Caco-2 (cell line): ENCODE measurements at regions of chr22 and their contacts with region 1.

Region 1: DNA sequence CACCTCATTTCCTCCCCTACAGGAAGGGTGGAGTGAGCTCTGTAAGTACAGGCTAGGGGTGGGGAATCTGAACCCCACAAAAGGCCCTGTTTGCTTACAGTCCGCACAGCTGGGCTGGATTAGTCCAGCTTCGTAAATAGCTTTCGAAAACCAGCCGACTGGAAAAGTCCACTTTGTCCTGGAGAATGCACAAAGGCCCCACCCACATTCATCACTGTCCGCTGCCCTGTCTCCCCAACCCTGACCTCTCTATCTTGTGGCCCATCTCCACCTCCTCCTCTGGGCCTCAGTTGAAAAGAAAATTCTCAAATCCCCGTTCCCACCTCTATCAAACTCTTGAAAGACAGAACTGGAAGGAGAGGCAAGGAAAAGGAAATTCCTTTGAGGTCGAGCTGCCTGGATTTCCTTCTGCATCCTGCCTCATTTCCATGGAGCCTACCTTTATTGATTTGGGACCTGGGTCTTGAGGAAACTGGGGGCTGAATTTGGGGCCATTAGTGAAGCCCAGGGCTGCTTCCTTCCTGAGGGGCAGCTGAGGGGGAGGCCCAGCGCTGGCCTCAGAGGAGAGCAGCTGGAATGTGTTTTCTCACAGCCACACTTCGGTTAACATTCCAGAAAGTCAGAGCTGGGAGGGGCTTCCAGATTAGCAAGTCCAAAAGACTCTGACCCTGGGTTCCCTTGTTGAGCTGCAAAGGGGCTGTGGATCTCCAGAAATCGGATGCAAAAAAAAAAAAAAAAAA is 147.6 kb downstream of the FBXO7 start:
- DNase-seq: peak; percentile 80 to 88
- H3K4me3 ChIP-seq: no peak overlapping the region
- H3K4me3 Mint-ChIP-seq: peak overlapping the region; percentile 70
- H3K27ac Mint-ChIP-seq: peak overlapping the region; percentile 95
- H3K4me1 ChIP-seq: peaks cover 42% of the 10 kb centered on the region
- H3K4me1 Mint-ChIP-seq: peaks cover 15% of the 10 kb centered on the region
- H3K27me3 ChIP-seq: no peaks in the 10 kb centered on the region
- H3K27me3 Mint-ChIP-seq: no peaks in the 10 kb centered on the region
- CTCF ChIP-seq: no peak

Region 2: GRCh38 chr22:32644252-32645100 is 22.3 kb after region 1 on chr22:
- CTCF ChIA-PET with region 1: no interaction called
- POLR2A ChIA-PET with region 1: no interaction called
- intact Hi-C with region 1: loop called (anchors 2 kb)
- DNase-seq: peak; percentile 65 to 81
- H3K4me3 ChIP-seq: no peak overlapping the region
- H3K4me3 Mint-ChIP-seq: no peak overlapping the region
- H3K27ac Mint-ChIP-seq: peak overlapping the region; percentile 92
- H3K4me1 ChIP-seq: peaks cover 11% of the 10 kb centered on the region
- H3K4me1 Mint-ChIP-seq: peaks cover 14% of the 10 kb centered on the region
- H3K27me3 ChIP-seq: no peaks in the 10 kb centered on the region
- H3K27me3 Mint-ChIP-seq: no peaks in the 10 kb centered on the region
- CTCF ChIP-seq: peak in 1 of 2 experiments; percentile 3

Region 3: DNA sequence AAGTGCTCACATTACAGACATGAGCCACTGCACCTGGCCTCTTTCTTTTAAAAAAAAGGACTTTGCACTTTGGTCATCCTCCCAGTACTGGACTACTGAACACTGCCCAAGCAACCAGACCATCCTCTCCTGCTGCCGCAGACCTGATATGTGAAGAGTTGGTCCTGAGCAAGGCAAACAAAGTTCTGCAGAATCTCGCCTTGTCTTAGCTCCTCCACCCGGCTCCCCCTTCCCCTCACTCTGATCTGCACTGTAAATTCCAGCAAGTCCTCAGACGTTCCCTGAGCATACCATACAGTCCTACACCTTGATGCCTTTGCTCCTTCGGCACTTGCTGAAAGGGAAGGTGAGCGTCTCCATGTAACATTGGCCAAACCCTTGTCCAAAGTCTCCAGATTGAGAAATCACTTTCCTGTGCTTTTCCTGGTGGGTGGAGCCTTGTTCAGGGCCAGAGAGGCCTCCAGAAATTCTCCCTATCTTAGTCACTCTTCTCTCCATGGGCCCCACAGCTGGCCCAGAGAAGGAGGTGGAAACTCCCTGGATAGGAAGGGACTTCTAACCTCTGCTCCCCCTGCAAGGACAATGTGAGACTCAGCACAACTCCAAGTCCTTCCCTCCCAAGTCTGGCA is 132.4 kb after region 1 on chr22:
- CTCF ChIA-PET with region 1: no interaction called
- POLR2A ChIA-PET with region 1: no interaction called
- intact Hi-C with region 1: no loop called
- DNase-seq: peak; percentile 64 to 77
- H3K4me3 ChIP-seq: no peak overlapping the region
- H3K4me3 Mint-ChIP-seq: peak overlapping the region; percentile 64
- H3K27ac Mint-ChIP-seq: peak overlapping the region; percentile 94
- H3K4me1 ChIP-seq: peaks cover 29% of the 10 kb centered on the region
- H3K4me1 Mint-ChIP-seq: peaks cover 17% of the 10 kb centered on the region
- H3K27me3 ChIP-seq: no peaks in the 10 kb centered on the region
- H3K27me3 Mint-ChIP-seq: no peaks in the 10 kb centered on the region
- CTCF ChIP-seq: no peak

Region 4: GRCh38 chr22:32788909-32789624 is 166.9 kb after region 1 on chr22:
- CTCF ChIA-PET with region 1: no interaction called
- POLR2A ChIA-PET with region 1: no interaction called
- intact Hi-C with region 1: loop called (anchors 10 kb)
- DNase-seq: peak; percentile 70 to 77
- H3K4me3 ChIP-seq: no peak overlapping the region
- H3K4me3 Mint-ChIP-seq: peak overlapping the region; percentile 27
- H3K27ac Mint-ChIP-seq: peak overlapping the region; percentile 98
- H3K4me1 ChIP-seq: peaks cover 22% of the 10 kb centered on the region
- H3K4me1 Mint-ChIP-seq: peaks cover 28% of the 10 kb centered on the region
- H3K27me3 ChIP-seq: no peaks in the 10 kb centered on the region
- H3K27me3 Mint-ChIP-seq: no peaks in the 10 kb centered on the region
- CTCF ChIP-seq: no peak